ENCODE measurements at regions of chr17 and their contacts with region 1.

Region 1: GRCh38 chr17:42704837-42705494 is 22.6 kb downstream of the CNTNAP1 start:
- DNase-seq: no peak
- ATAC-seq: peak; percentile 78
- H3K4me3 Mint-ChIP-seq: peak overlapping the region; percentile 74
- H3K27ac Mint-ChIP-seq: peak overlapping the region; percentile 94
- H3K4me1 Mint-ChIP-seq: peaks cover 61% of the 10 kb centered on the region
- H3K27me3 Mint-ChIP-seq: no peaks in the 10 kb centered on the region
- CTCF ChIP-seq: no peak

Region 2: DNA sequence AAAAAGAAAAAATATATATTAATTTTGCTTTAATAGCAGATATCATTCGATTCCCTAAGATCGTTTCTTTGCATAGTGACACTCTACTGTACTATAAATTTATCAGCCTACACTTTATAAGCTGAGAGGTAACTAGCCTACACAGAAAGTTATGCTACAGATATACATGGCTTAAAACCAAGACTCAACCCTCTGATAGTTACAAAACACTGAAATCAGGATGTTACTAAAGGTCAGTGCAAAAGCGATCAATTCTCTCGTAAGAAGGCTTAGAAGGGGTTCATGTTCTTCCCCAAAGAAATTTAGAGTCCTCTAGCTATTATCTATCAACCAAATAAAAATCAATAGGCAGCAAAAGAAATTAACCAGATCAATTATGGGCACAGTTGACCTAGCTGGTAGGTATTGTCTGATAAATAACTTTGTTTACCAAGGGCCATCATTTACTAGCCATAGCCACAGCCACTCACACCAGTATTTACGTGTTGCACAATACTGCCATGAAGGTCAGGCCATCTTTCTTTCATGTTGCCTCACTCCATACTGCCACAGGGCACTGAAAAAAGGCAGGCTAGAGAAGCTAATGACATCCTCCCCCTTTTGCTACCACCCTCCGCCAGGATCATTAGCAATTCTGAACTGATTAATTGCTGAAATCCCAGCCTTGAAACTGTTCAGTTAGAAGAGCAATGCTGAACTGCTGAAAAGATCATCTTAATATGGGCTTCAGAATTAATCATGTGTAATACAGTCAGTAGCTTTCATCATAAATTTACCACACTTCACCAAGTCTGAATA is 363.8 kb after region 1 on chr17:
- CTCF ChIA-PET with region 1: no interaction called
- POLR2A ChIA-PET with region 1: interaction called, 11 read pairs
- intact Hi-C with region 1: no loop called
- DNase-seq: no peak
- ATAC-seq: no peak
- H3K4me3 Mint-ChIP-seq: no peak overlapping the region
- H3K27ac Mint-ChIP-seq: no peak overlapping the region
- H3K4me1 Mint-ChIP-seq: no peaks in the 10 kb centered on the region
- H3K27me3 Mint-ChIP-seq: no peaks in the 10 kb centered on the region
- CTCF ChIP-seq: no peak